ENCODE measurements at regions of chr4 and their contacts with region 1.

Region 1: GRCh38 chr4:39365830-39366771 is at the start of gene RFC1:
- DNase-seq: peak; percentile 91
- H3K4me3 ChIP-seq: peak within 1 kb of the TSS; percentile 89 to 100 (median 93)
- H3K27ac ChIP-seq: peak within 1 kb of the TSS; percentile 74
- H3K4me1 ChIP-seq: peaks cover 9% of the 10 kb centered on the region
- H3K27me3 ChIP-seq: no peaks in the 10 kb centered on the region
- CTCF ChIP-seq: no peak
- total RNA-seq, gene RFC1: 36.2 to 70.9 TPM

Region 2: DNA sequence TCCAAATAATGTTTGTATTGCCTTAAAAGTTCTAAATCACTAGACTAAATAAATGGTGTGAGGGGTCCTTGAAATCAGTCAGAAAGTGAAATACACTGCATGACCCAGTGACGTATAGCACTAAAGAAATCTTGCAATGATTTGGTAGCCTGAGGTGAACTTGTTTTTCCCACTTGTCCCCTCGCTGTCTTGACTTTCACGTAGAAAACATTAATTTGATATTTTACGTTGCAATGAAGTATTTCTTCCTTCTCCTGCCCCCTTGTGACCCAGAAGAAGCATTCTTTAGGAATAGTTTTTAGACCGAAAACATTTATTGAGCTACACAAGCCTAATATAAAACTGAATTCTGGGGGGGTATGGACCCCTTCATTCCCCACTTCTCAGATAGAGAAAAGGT is 44.3 kb after region 1 on chr4:
- CTCF ChIA-PET with region 1: interaction called, 10 read pairs
- dilution Hi-C with region 1: no loop called
- in situ Hi-C with region 1: no loop called
- intact Hi-C with region 1: no loop called
- DNase-seq: no peak
- H3K4me3 ChIP-seq: no peak overlapping the region
- H3K27ac ChIP-seq: no peak overlapping the region
- H3K4me1 ChIP-seq: no peaks in the 10 kb centered on the region
- H3K27me3 ChIP-seq: no peaks in the 10 kb centered on the region
- CTCF ChIP-seq: no peak

Region 3: DNA sequence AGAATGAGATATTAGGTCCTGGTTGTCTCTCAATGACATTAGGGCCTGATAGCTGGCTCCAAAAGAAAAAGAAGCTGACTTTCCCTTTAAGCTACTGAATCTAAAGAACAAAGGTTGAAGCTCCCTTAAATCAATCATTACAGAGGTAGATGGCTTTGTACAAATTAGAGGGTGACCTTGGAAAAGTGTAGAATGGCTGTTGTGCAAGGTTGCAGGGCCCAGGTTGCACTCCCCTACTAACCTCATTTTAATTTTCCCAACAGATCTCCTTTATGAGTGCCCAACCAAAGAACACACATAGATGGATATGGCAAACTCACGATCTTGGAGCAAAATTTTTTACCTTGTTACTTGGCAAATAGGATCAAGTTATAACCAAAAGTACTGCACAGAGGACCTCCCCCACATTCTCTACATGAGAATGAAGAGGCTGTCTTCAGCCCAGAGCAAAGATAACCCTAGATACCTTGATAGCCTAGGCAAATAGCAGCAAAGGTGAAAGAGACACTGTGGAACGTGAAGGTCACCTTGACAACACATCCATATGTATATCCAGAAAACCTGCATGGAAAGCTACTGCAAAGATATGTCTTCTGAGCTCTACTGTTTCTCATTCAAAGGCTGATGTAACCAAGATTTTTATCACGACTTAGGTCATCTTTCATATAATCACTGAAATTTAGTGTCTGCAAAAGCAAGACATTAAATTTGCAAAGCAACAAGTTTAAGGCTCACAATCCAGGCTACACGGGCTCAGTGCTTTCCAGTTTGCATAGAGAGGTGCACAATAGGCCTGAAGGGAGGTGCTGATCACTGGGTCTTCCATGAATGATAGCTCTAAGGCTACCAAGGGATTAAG is 63.6 kb after region 1 on chr4:
- CTCF ChIA-PET with region 1: no interaction called
- dilution Hi-C with region 1: loop called (anchors 5 kb)
- in situ Hi-C with region 1: no loop called
- intact Hi-C with region 1: no loop called
- DNase-seq: no peak
- H3K4me3 ChIP-seq: no peak overlapping the region
- H3K27ac ChIP-seq: no peak overlapping the region
- H3K4me1 ChIP-seq: no peaks in the 10 kb centered on the region
- H3K27me3 ChIP-seq: no peaks in the 10 kb centered on the region
- CTCF ChIP-seq: no peak

Measured in mammary epithelial cell (primary cell).